Uterus (tissue), 4 donors: ENCODE measurements at regions of chr10 and their contacts with region 1.

Region 1: GRCh38 chr10:6144406-6145165 is 55.8 kb downstream of the RBM17 start:
- DNase-seq: peak; percentile 89 to 90
- H3K4me3 ChIP-seq: peak overlapping the region; percentile 55 to 77
- H3K27ac ChIP-seq: peak overlapping the region; percentile 87 to 89
- H3K4me1 ChIP-seq: peaks cover 0 to 10% of the 10 kb centered on the region in 2 donors
- H3K27me3 ChIP-seq: no peaks in the 10 kb centered on the region
- CTCF ChIP-seq: no peak
- POLR2A ChIP-seq: peak; percentile 60 to 79

Region 2: DNA sequence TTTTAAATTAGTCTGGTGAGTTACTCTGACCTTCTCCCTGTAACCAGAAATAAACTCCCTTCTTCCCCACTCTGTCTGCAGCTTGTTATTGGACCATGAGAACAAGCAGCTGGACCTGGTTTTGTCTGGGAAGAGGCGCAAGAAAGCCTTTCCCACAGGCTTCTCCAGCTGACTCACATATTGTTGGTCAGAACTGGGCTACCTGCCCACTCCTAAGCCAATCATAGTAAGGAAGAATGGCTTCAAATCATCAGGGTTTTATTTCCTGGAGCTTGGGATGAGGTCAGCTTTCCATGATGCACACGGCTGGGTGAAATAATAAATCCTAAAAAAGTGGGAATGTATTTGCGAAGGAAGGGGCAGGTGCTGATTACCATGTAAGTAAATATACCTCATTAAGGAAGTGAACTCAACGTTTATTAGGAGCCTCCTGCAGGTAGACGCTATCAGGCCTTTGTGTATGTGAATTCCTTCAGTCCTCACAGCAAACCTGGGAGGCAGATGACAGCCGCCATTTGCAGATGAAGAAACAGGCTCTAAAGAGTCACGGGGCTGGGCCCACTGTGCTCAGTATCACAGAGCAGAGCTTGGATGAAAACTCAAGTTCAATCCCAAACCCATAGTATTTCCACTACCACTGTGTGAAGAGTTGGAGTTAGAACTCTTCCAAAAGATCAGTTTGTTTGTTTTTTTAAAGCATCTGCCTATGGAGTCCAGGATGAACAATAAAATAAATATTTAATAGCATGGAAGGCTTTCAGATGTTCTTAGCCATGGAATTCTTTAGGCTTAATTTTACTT is 200.0 kb before region 1 on chr10:
- intact Hi-C with region 1: loop called (anchors 5 kb)
- DNase-seq: peak; percentile 91 to 98
- H3K4me3 ChIP-seq: peak overlapping the region in 1 of 2 donors; percentile 29
- H3K27ac ChIP-seq: peak overlapping the region; percentile 96 to 98
- H3K4me1 ChIP-seq: peaks cover 6 to 19% of the 10 kb centered on the region in 2 donors
- H3K27me3 ChIP-seq: no peaks in the 10 kb centered on the region
- CTCF ChIP-seq: no peak
- POLR2A ChIP-seq: peak; percentile 42

Region 3: DNA sequence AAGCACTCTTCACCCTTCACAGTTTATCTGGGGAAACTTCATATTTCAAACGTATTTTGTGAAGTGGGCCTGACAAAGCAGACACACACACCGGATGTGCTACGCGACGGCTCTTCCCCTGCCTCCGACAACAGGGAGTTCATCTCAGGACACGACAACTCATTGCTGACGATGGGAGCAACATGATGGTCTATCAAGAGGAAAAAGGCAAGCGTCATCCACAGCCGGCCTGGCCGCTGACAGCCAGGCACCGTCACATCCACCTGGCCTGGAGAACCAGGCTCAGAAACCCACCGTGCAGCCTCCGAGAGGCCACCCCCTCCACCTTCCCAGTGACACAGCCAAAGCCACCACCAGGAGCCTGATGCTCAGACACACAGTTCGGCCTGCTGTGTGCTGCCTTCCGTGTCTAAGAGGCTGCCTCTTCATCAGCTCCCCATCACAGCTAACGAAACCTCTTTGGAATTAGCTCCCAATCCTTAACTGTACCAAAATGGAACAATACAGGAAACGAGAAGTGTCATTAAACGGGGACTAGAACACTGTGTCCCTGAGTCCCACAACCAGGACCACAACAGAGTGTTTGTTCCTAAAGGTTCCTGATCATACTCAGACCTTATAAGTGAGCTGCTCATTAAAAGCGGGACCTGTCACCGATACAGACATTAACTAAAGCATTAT is 1189.5 kb after region 1 on chr10:
- intact Hi-C with region 1: no loop called
- DNase-seq: no peak
- H3K4me3 ChIP-seq: no peak overlapping the region
- H3K27ac ChIP-seq: peak overlapping the region in 1 of 2 donors; percentile 17
- H3K4me1 ChIP-seq: no peaks in the 10 kb centered on the region
- H3K27me3 ChIP-seq: no peaks in the 10 kb centered on the region
- CTCF ChIP-seq: no peak
- POLR2A ChIP-seq: no peak